ENCODE measurements at regions of chr12 and their contacts with region 1.

Region 1: DNA sequence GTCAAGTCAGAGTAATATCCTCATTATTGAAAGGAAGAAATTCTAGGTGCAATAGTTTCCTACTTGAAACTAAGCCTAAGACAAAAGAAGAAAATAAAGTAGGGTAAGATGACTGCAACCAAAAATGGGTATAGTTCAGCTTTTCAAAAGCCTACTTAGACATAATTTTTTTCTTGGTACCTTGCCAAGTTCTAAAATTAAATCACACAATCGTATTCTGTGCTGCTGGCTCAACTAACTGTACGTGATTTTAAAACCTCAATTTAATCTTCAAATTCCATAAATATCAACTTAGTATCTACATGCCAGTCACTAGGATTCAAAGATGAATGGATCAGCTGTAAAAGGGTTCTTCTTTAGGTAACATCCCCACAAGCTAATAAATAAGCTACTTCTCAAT is 56.9 kb downstream of the SCAF11 start:
- DNase-seq: no peak
- ATAC-seq: no peak
- H3K4me3 ChIP-seq: no peak overlapping the region
- H3K4me3 Mint-ChIP-seq: no peak overlapping the region
- H3K27ac ChIP-seq: no peak overlapping the region
- H3K27ac Mint-ChIP-seq: no peak overlapping the region
- H3K4me1 ChIP-seq: no peaks in the 10 kb centered on the region
- H3K4me1 Mint-ChIP-seq: peaks cover 14% of the 10 kb centered on the region
- H3K27me3 ChIP-seq: no peaks in the 10 kb centered on the region
- H3K27me3 Mint-ChIP-seq: no peaks in the 10 kb centered on the region
- CTCF ChIP-seq: no peak

Region 2: GRCh38 chr12:45946435-45946834 is 12.9 kb after region 1 on chr12:
- CTCF ChIA-PET with region 1: no interaction called
- POLR2A ChIA-PET with region 1: interaction called, 3 read pairs
- intact Hi-C with region 1: loop called in 1 of 2 experiments (anchors 2 kb)
- DNase-seq: no peak
- ATAC-seq: no peak
- H3K4me3 ChIP-seq: no peak overlapping the region
- H3K4me3 Mint-ChIP-seq: no peak overlapping the region
- H3K27ac ChIP-seq: no peak overlapping the region
- H3K27ac Mint-ChIP-seq: no peak overlapping the region
- H3K4me1 ChIP-seq: no peaks in the 10 kb centered on the region
- H3K4me1 Mint-ChIP-seq: peaks cover 8% of the 10 kb centered on the region
- H3K27me3 ChIP-seq: no peaks in the 10 kb centered on the region
- H3K27me3 Mint-ChIP-seq: no peaks in the 10 kb centered on the region
- CTCF ChIP-seq: no peak

Measured in CD8-positive, alpha-beta T cell (primary cell).